RWPE1 (cell line): ENCODE measurements at regions of chr1 and their contacts with region 1.

Region 1: DNA sequence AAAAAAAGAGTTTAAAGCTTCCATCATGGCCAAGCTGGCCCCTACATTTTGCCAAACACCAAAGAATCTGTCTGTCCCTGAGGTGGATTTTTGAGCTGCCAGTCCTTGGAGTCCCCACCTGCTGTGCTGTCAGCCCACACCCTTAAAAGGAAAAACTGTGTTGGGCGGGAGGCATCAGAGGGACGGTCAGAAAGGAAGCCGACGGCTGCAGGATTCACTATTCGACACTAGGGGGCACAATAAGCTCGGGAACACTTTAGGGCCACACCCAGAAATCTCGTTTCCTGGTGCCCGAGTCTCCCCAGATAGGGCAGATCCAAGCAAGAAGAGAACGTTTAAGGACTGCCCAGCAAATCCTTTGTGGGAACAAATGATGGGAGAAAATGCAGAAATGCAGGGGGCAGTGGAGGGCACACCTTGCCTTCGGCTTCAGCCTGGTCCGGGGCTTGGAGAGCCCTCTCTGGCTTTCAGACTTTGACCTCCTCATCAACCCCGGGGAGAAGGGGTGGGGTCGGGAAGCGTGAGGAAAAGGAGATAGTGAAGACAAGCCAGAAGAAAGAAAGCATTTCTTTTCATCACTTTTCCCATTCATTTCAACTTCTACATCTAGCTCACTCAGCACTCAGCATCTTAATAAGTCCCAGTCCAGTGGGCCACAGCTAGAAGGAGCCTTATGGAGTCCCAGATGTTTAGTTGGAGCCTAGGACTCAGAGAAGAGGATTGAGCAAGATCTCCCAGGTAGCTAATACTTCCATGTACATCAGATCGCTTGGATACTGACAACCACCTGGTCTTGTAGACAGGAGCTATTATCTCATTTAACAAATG is 5.0 kb upstream of the CTTNBP2NL start:
- DNase-seq: peak; percentile 84
- H3K27ac ChIP-seq: peak overlapping the region; percentile 74
- CTCF ChIP-seq: peak; percentile 93

Region 2: GRCh38 chr1:112466078-112466660 is 75.2 kb after region 1 on chr1:
- CTCF ChIA-PET with region 1: interaction called, 27 read pairs
- POLR2A ChIA-PET with region 1: no interaction called
- DNase-seq: peak; percentile 82
- H3K27ac ChIP-seq: peak overlapping the region; percentile 30
- CTCF ChIP-seq: peak; percentile 85